Heart left ventricle (tissue), 16 donors: ENCODE measurements at regions of chr17 and their contacts with region 1.

Region 1: DNA sequence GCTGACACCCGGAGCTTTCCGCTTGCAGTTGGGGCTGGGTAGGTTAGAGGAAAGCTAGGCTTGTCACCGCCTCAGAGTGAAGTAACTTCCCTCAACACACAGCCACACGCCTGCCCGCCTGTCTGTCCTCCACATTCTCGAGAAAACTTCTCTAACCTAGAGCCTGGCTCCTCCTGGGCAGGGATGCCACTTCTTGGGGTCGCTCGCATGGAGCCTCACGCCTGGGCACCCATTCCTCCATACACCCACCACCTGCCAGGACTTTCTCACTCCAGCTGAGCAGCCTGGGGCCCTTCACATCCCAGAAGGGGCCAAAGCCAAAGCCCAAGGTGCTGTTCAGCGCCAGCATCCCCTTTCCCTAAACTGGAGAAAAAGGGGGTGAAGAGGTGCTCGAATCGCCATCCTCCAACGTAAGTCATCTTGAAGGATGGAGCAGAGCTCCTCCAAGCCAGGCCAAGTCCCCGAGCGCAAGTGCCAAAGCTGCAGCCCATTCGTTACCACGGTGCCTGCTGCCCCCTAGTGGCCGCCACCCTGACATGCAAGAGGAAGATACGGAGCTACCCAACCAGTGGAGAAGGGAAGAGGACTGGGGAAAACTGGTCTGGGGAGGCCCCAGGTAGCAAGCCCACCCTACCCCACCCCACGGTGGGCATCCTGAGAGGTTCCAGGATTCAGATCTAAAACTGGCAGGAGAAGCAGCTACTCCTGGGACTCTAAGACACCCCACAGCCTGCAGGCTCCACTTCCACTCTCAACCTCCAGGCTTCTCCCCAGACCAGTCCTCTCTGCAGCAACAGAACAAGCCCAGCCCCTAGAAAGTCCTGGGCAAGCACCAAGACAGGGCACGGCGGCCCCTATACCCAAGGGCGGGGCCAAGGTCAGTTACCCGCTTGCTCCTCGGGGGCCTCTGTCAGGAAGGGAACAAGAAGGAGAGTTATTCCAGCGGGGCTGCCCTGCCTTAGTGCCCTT is 63.1 kb downstream of the MYO18A start:
- DNase-seq: peak; percentile 69 to 91 (median 79)
- ATAC-seq: peak in 3 of 4 donors; percentile 40 to 50 (median 47)
- H3K4me3 ChIP-seq: no peak overlapping the region
- H3K27ac ChIP-seq: peak overlapping the region in 2 of 12 donors; percentile 20
- H3K4me1 ChIP-seq: peaks cover 9 to 39% (median 21%) of the 10 kb centered on the region in 12 donors
- H3K27me3 ChIP-seq: no peaks in the 10 kb centered on the region
- CTCF ChIP-seq: peak; percentile 87 to 96 (median 92)
- POLR2A ChIP-seq: no peak

Region 2: GRCh38 chr17:28967221-28968140 is 149.6 kb before region 1 on chr17:
- intact Hi-C with region 1: loop called (anchors 1 to 2 kb)
- DNase-seq: peak in 1 of 5 donors; percentile 37
- ATAC-seq: peak in 1 of 4 donors; percentile 3
- H3K4me3 ChIP-seq: no peak overlapping the region
- H3K27ac ChIP-seq: peak overlapping the region in 1 of 12 donors; percentile 69
- H3K4me1 ChIP-seq: peaks cover 0 to 42% (median 20%) of the 10 kb centered on the region in 12 donors
- H3K27me3 ChIP-seq: peaks cover 0 to 8% (median 0%) of the 10 kb centered on the region in 9 donors
- CTCF ChIP-seq: no peak
- POLR2A ChIP-seq: no peak

Region 3: DNA sequence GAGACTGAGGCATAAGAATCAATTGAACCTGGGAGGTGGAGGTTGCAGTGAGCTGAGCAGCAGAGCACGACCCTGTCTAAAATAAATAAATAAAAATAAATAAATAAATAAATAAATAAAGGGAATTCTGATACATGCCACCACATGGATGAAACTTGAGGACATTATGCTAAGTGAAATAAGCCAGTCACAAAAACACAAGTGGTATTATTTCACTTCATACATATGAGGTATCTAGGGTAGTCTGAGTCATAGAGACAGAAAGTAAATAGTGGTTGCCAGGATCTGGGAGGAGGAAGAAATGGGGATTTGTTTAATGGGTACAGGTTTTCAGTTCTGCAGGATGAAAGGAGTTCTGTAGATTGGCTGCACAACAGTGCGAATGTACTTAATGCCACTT is 57.8 kb before region 1 on chr17:
- intact Hi-C with region 1: no loop called
- DNase-seq: no peak
- ATAC-seq: no peak
- H3K4me3 ChIP-seq: no peak overlapping the region
- H3K27ac ChIP-seq: no peak overlapping the region
- H3K4me1 ChIP-seq: peaks cover 0 to 16% (median 5%) of the 10 kb centered on the region in 12 donors
- H3K27me3 ChIP-seq: peaks cover 0 to 3% (median 0%) of the 10 kb centered on the region in 9 donors
- CTCF ChIP-seq: no peak
- POLR2A ChIP-seq: no peak

Region 4: GRCh38 chr17:29180034-29180787 is 63.1 kb after region 1 on chr17 and contains the start of gene MYO18A:
- intact Hi-C with region 1: no loop called
- DNase-seq: peak; percentile 81 to 92 (median 84)
- ATAC-seq: peak; percentile 59 to 89 (median 82)
- H3K4me3 ChIP-seq: peak within 1 kb of the TSS; percentile 39 to 87 (median 67)
- H3K27ac ChIP-seq: peak within 1 kb of the TSS; percentile 68 to 95 (median 88)
- H3K4me1 ChIP-seq: peaks cover 6 to 56% (median 47%) of the 10 kb centered on the region in 12 donors
- H3K27me3 ChIP-seq: no peaks in the 10 kb centered on the region
- CTCF ChIP-seq: peak; percentile 61 to 93 (median 85)
- POLR2A ChIP-seq: peak in 1 of 2 donors; percentile 23
- total RNA-seq, gene MYO18A: 241 to 340 (median 300) TPM